ENCODE measurements at regions of chr20 and their contacts with region 1.

Region 1: GRCh38 chr20:34876162-34877001 is at the start of gene ACSS2:
- DNase-seq: peak; percentile 100
- H3K4me3 Mint-ChIP-seq: peak within 1 kb of the TSS; percentile 85
- H3K27ac Mint-ChIP-seq: peak within 1 kb of the TSS; percentile 93
- H3K4me1 Mint-ChIP-seq: peaks cover 52% of the 10 kb centered on the region
- H3K27me3 Mint-ChIP-seq: peaks cover 31% of the 10 kb centered on the region
- CTCF ChIP-seq: no peak
- total RNA-seq, gene ACSS2: 34.9 and 35.3 TPM in 2 replicates

Region 2: GRCh38 chr20:34654207-34654744 is 222.1 kb before region 1 on chr20:
- CTCF ChIA-PET with region 1: no interaction called
- intact Hi-C with region 1: no loop called
- DNase-seq: no peak
- H3K4me3 Mint-ChIP-seq: no peak overlapping the region
- H3K27ac Mint-ChIP-seq: peak overlapping the region; percentile 22
- H3K4me1 Mint-ChIP-seq: peaks cover 9% of the 10 kb centered on the region
- H3K27me3 Mint-ChIP-seq: no peaks in the 10 kb centered on the region
- CTCF ChIP-seq: no peak

Region 3: GRCh38 chr20:34907616-34908469 is 31.5 kb after region 1 on chr20:
- CTCF ChIA-PET with region 1: interaction called, 10 read pairs
- intact Hi-C with region 1: no loop called
- DNase-seq: peak; percentile 66
- H3K4me3 Mint-ChIP-seq: no peak overlapping the region
- H3K27ac Mint-ChIP-seq: peak overlapping the region; percentile 78
- H3K4me1 Mint-ChIP-seq: peaks cover 14% of the 10 kb centered on the region
- H3K27me3 Mint-ChIP-seq: no peaks in the 10 kb centered on the region
- CTCF ChIP-seq: no peak

Region 4: DNA sequence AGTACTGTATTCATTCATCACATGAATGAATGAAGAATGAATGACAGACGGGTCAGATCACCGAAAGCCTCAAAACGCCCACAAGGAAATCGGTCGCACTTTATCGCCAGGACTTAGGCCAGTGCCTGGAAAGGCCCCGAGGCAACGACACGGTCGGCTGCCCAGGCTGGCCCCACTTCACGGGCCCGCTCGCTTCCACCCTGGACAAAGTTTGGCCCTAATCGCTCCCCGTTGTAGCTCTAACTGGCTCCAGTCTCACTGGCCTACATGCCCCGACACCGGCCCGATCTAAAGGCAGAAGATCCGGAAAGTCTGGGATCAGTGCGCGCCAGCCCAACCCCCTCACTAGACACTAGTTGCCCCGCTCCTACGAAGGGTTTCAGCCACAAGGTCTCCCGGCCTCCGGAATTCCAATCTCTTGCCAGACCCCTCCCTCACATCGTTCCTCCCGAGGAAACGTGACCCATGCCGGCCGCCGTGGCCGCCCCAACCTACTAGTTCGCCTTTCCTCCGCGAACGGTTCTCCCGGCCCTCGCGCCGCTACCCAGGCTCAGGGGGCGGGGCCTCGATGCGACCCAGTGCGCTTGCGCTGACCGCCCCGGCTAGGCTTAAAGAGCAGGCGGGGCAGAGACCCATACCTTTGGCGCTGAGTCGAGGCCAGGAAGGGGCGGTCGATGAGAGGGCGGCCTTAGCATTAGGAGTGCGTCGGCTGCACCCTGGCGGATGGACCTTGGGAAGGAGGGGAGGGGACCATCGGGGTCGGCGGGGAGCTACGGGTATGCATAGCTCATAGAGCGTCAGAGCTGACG is 79.1 kb after region 1 on chr20 and contains the starts of genes GSS and MYH7B:
- CTCF ChIA-PET with region 1: interaction called, 107 read pairs
- intact Hi-C with region 1: loop called (anchors 1 kb)
- DNase-seq: peak; percentile 100
- H3K4me3 Mint-ChIP-seq: peak within 1 kb of the TSS; percentile 95
- H3K27ac Mint-ChIP-seq: peak within 1 kb of the TSS; percentile 86
- H3K4me1 Mint-ChIP-seq: peaks cover 21% of the 10 kb centered on the region
- H3K27me3 Mint-ChIP-seq: no peaks in the 10 kb centered on the region
- CTCF ChIP-seq: no peak
- total RNA-seq, gene GSS: 110 and 116 TPM in 2 replicates
- total RNA-seq, gene MYH7B: 0.52 and 0.73 TPM in 2 replicates

Region 5: DNA sequence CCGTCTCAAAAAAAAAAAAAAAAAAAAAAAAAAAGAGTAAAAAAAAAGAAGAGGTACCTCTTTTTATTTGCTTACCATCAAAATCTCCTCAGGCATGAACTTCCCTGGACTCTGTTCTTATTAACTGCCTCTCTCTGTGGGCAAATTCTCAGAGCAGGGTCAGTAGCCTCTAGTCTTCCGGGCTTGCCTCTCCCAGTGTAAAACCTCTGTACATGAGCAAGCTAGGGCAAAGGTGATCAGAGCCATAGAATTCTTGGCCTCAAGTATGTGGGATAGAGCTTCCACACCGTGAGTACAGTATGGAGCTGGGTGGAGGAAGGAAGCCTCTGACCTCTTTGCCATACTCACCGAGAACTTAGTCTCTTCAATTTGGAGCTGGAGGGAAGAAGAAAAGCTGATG is 157.8 kb after region 1 on chr20:
- CTCF ChIA-PET with region 1: interaction called, 12 read pairs
- intact Hi-C with region 1: no loop called
- DNase-seq: no peak
- H3K4me3 Mint-ChIP-seq: no peak overlapping the region
- H3K27ac Mint-ChIP-seq: no peak overlapping the region
- H3K4me1 Mint-ChIP-seq: peaks cover 5% of the 10 kb centered on the region
- H3K27me3 Mint-ChIP-seq: no peaks in the 10 kb centered on the region
- CTCF ChIP-seq: no peak

Region 6: DNA sequence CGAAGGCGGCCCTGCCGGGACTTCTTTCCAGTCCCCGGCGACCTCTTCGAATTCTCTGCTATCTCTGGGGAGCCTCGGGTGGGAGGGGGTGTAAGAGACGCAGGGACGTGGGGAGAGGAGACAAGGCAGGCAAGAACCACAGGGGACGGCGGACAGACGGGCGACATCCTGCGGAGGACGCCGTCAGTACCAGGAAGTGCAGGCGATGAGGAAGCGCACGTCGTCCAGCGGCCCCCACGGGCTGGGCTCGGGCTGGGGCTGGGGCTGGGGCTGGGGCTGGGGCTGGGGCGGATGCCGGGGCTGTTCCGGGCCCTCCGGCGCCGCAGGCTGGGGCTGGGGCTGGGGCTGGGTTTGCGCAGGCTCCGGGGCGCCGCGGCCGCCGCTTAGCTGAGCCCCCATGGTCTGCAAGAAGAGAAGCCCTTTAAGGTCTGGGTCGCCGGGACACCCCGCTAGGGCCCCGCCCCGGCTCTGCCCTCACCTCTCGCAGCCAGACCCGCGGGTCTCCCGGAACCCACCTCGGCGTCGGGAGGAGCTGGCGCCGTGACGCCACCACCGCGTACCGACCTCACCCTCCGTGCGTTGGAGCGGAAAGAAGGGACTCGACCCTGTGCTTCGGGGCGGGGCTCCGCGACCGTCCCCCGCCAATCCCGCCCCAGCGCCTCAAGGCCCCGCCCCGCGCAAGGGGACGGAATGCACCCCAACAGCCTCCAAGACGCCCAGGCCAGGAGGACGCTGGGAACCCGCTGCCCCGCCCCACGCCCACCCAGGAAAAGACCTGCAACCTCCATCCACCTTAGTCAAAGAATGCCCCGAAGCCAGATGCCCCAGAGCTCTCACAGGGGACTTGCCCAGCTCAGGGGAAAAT is 401.4 kb after region 1 on chr20 and contains the start of gene MMP24OS:
- CTCF ChIA-PET with region 1: no interaction called
- intact Hi-C with region 1: no loop called
- DNase-seq: peak; percentile 98
- H3K4me3 Mint-ChIP-seq: peak within 1 kb of the TSS; percentile 85
- H3K27ac Mint-ChIP-seq: peak within 1 kb of the TSS; percentile 95
- H3K4me1 Mint-ChIP-seq: peaks cover 25% of the 10 kb centered on the region
- H3K27me3 Mint-ChIP-seq: no peaks in the 10 kb centered on the region
- CTCF ChIP-seq: peak; percentile 17
- total RNA-seq, gene MMP24OS: 86.8 and 95.4 TPM in 2 replicates